SK-N-SH (cell line): ENCODE measurements at regions of chr11 and their contacts with region 1.

Region 1: GRCh38 chr11:59560702-59561469 is 49.5 kb downstream of the OR4D9 start:
- DNase-seq: peak; percentile 91
- H3K4me3 ChIP-seq: peak overlapping the region; percentile 79 to 86
- H3K27ac ChIP-seq: peak overlapping the region; percentile 79 to 82
- H3K4me1 ChIP-seq: peaks cover 0 to 5% of the 10 kb centered on the region in 2 experiments; a peak in 2 of 4 replicates
- H3K27me3 ChIP-seq: no peaks in the 10 kb centered on the region
- CTCF ChIP-seq: no peak
- EP300 ChIP-seq: no peak
- RAD21 ChIP-seq: no peak

Region 2: GRCh38 chr11:59550368-59550841 is 10.5 kb before region 1 on chr11:
- CTCF ChIA-PET with region 1: interaction called, 17 read pairs
- POLR2A ChIA-PET with region 1: no interaction called
- DNase-seq: peak; percentile 81
- H3K4me3 ChIP-seq: peak overlapping the region; percentile 66 to 77
- H3K27ac ChIP-seq: peak overlapping the region; percentile 91 to 93
- H3K4me1 ChIP-seq: peaks cover 0 to 2% of the 10 kb centered on the region in 2 experiments; a peak in 2 of 4 replicates
- H3K27me3 ChIP-seq: no peaks in the 10 kb centered on the region
- CTCF ChIP-seq: peak; percentile 55
- EP300 ChIP-seq: no peak
- RAD21 ChIP-seq: no peak